MCF 10A (cell line): ENCODE measurements at regions of chr18 and their contacts with region 1.

Region 1: DNA sequence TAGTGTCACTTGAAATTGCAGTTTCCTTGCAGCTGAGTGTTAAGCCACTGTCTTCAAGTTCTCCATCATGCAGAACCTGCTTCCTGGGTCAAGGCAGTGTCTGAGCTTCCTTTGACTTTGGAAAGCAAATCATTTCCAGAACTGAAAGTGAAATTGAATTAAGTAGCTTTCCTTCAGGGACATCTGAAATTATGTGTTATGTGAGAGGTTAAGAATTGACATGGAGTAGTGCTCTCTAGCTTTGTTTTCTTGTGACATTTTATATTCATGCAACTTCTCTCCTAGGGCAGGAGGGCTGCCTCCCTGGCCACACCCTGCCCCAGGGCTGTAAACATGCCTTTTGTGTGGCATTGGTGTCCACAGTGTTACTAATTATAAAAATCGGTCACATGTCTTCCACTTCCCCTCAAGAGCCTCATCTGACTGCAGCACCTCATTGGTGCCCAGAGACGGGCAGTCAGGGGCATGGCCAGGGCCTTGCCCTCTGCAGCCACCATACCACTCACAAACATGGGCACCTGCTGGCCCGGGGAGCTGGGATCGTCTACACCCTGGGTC is 14.4 kb downstream of the RAB12 start:
- DNase-seq: peak; percentile 20
- H3K4me3 Mint-ChIP-seq: no peak overlapping the region
- H3K27ac Mint-ChIP-seq: no peak overlapping the region
- H3K4me1 Mint-ChIP-seq: peaks cover 7% of the 10 kb centered on the region
- H3K27me3 Mint-ChIP-seq: no peaks in the 10 kb centered on the region
- CTCF ChIP-seq: no peak

Region 2: GRCh38 chr18:8608795-8609658 is 14.6 kb before region 1 on chr18 and contains the start of gene RAB12:
- CTCF ChIA-PET with region 1: no interaction called
- POLR2A ChIA-PET with region 1: interaction called, 12 read pairs
- intact Hi-C with region 1: no loop called
- DNase-seq: peak; percentile 75
- H3K4me3 Mint-ChIP-seq: peak within 1 kb of the TSS; percentile 86
- H3K27ac Mint-ChIP-seq: peak within 1 kb of the TSS; percentile 92
- H3K4me1 Mint-ChIP-seq: peaks cover 24% of the 10 kb centered on the region
- H3K27me3 Mint-ChIP-seq: peaks cover 13% of the 10 kb centered on the region
- CTCF ChIP-seq: peak; percentile 81
- total RNA-seq, gene RAB12: 27.8 and 28.4 TPM in 2 replicates